Activated CD4-positive, alpha-beta T cell treated with anti-CD3 and anti-CD28 coated beads, Interleukin-2, amount 10 ng/mL, durations not matched to agents 24 days and 14 days (primary cell): ENCODE measurements at regions of chr1 and their contacts with region 1.

Region 1: DNA sequence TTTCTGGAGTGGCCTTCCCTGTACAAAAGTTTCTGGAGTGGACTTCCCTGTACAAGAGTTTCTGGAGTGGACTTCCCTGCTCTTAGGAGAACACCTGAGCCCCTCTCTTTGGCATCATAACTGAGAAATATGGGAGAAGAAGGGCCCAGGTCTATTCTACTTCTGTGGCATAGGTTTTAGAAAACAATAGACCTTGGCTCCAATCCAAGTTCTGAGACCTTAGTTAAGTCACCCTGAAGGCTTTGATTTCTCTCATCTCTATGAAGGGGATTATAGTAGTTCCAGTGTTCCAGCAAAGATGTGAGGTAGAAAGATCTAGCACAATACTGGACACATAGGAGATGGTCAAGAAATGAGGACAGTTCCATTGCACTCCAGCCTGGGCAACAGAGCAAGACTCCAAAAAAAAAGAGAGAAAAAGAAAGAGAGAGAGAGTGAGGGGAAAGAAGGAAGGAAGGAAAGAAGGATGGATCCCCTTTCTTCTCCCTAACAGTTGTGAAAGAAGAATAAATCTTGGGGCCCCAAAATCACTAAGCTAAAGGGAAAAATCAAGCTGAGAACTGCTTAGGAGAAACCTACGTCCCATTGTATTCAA is 13.3 kb upstream of the EIF4G3 start:
- DNase-seq: no peak
- H3K4me3 Mint-ChIP-seq: no peak overlapping the region
- H3K27ac Mint-ChIP-seq: no peak overlapping the region
- H3K4me1 Mint-ChIP-seq: peaks cover 2% of the 10 kb centered on the region
- H3K27me3 Mint-ChIP-seq: peaks cover 10% of the 10 kb centered on the region

Region 2: DNA sequence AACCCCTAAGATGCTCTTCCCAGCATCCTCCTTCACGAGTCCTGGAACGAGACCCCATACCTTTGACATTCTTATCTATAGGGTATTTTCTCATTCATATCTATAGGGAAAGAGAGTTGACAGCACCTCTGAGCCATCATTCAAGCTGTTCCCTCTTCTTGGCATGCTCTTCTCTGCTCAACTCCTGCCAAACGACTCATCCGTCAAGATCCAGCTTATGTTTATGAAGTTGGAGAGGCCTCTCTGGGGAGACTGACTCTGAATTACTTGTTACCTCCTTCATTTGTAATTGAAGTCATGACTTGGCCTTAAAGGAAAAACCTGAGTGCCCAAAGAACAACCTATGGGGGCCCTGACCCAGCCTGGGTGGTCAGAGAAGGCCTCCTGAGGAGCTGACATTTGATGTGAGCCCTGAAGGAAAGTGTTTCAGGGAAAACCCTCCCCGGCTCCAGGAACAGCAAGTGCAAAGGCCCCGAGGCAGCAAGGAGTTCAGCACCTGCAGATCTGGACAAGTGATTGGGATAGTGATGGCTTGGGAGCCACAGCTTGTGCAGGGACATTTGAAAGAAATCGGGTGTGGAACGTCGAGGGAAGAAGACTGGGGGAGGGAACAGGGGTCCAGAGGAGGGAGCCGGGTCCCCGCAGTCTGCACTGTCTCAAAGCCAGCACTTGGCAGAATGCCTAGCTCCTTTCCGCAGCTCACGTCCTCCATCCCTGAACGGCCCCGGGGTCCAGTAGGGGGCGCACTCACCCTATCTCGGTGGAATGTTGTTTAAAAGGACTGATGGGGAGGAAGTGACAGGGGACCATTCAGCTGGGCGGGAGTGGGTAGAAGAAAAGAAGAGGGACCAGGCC is 615.1 kb before region 1 on chr1:
- intact Hi-C with region 1: loop called (anchors 10 kb)
- DNase-seq: peak; percentile 92
- H3K4me3 Mint-ChIP-seq: no peak overlapping the region
- H3K27ac Mint-ChIP-seq: no peak overlapping the region
- H3K4me1 Mint-ChIP-seq: peaks cover 5% of the 10 kb centered on the region
- H3K27me3 Mint-ChIP-seq: peaks cover 19% of the 10 kb centered on the region

Region 3: DNA sequence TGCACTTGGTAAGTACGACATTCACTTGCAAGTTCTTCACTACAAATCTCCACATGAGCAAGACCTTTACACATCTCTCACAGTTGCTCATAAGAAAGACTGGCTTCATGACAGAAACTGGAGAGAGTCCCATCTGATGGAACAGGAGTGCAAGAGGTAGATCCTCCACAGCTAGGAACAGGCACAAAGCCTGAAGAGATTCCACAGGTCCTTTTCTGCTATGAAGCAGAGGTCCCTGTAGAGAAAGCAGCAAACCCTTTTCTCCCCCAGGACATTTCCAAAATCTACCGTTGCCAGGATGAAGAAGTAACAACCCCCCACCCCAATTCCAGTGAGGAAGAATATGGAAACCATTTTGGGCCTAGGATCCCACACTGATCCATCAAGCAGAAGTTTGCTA is 60.6 kb before region 1 on chr1:
- intact Hi-C with region 1: no loop called
- DNase-seq: no peak
- H3K4me3 Mint-ChIP-seq: no peak overlapping the region
- H3K27ac Mint-ChIP-seq: no peak overlapping the region
- H3K4me1 Mint-ChIP-seq: no peaks in the 10 kb centered on the region
- H3K27me3 Mint-ChIP-seq: no peaks in the 10 kb centered on the region

Region 4: DNA sequence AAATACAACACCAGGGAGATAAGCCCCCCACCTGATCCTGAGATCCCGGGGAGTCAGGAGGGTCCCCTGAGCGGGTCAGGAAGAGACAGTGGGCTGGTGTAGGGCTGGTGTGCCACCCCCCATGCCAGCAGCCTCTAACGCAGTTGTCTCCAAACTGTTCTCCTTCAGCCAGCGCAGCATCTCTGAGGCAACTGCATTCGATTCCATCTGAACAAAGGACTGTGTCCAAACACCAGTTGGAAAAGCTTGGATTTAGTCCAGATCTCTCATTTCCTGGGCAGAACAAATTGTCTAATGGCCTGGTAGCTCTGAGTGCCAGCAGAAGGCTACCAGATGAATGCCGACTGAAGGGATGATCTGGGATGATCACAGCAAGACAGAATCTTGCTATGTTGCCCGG is 30.8 kb after region 1 on chr1:
- intact Hi-C with region 1: no loop called
- DNase-seq: no peak
- H3K4me3 Mint-ChIP-seq: no peak overlapping the region
- H3K27ac Mint-ChIP-seq: no peak overlapping the region
- H3K4me1 Mint-ChIP-seq: peaks cover 3% of the 10 kb centered on the region
- H3K27me3 Mint-ChIP-seq: no peaks in the 10 kb centered on the region